ENCODE measurements at regions of chr11 and their contacts with region 1.

Region 1: GRCh38 chr11:30653606-30654005 is 67.5 kb upstream of the MPPED2 start:
- DNase-seq: no peak
- ATAC-seq: no peak
- H3K4me3 ChIP-seq: no peak overlapping the region
- H3K27ac ChIP-seq: no peak overlapping the region
- H3K4me1 ChIP-seq: no peaks in the 10 kb centered on the region
- H3K27me3 ChIP-seq: no peaks in the 10 kb centered on the region
- CTCF ChIP-seq: peak in 3 of 9 donors; percentile 26 to 42 (median 36)

Region 2: DNA sequence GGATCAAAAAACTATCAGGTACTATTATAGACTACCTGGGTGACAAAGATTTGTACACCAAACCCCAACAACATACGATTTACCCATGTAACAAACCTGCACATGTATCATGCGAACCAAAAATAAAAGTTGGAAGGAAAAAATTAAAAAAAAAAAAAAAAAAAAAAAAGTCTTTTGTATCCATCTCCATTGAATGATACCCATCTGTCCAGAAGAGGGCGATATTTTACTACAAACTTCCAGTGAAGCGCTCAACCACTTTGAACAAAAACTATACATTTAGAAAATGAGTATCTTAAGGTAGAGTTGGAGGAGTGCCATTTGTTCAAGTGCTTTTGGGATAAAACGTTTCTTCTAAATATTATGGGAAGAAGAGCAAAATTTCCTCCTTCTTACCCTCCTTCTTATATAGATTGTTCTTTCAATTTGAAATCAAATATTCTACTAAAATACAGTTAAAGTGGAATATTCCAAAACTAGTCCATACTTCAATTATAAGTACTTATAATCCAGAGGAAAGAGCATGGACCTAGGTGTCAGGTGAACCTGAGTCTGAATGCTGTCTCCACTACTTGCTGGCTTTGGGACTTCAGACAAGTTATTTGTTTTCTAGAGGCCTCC is 307.4 kb before region 1 on chr11:
- intact Hi-C with region 1: loop called in 5 of 10 experiments (anchors 5 to 10 kb)
- DNase-seq: peak in 1 of 2 donors; percentile 19
- ATAC-seq: peak in 5 of 8 donors; percentile 25 to 64 (median 62)
- H3K4me3 ChIP-seq: peak overlapping the region in 1 of 10 donors; percentile 13
- H3K27ac ChIP-seq: no peak overlapping the region
- H3K4me1 ChIP-seq: peaks cover 0 to 4% (median 0%) of the 10 kb centered on the region in 9 donors
- H3K27me3 ChIP-seq: no peaks in the 10 kb centered on the region
- CTCF ChIP-seq: peak; percentile 48 to 83 (median 67)

Region 3: DNA sequence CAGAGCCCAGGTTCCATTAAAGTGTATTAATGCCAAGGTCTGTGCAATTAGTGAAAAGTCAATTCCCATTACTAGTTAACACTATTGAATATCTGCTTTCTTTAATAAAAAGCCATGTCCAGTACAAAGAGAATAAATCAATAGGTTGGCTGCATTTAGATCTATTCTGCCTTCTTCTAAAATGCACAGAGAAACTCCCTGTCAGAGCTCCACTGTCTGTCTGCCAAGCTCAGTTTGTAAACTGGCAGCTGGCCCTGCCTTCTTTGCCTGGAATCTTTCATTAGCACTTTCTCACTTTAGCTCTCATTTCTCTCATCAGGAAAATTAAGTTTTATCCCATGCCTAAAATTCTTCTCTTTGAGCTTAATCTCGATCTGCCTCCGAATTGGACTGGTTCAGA is 295.1 kb before region 1 on chr11:
- intact Hi-C with region 1: loop called in 1 of 10 experiments (anchors 10 kb)
- DNase-seq: peak in 1 of 2 donors; percentile 39
- ATAC-seq: peak in 5 of 8 donors; percentile 33 to 75 (median 62)
- H3K4me3 ChIP-seq: no peak overlapping the region
- H3K27ac ChIP-seq: peak overlapping the region in 2 of 10 donors; percentile 33 to 46
- H3K4me1 ChIP-seq: peaks cover 0 to 16% (median 0%) of the 10 kb centered on the region in 9 donors
- H3K27me3 ChIP-seq: no peaks in the 10 kb centered on the region
- CTCF ChIP-seq: no peak

Region 4: DNA sequence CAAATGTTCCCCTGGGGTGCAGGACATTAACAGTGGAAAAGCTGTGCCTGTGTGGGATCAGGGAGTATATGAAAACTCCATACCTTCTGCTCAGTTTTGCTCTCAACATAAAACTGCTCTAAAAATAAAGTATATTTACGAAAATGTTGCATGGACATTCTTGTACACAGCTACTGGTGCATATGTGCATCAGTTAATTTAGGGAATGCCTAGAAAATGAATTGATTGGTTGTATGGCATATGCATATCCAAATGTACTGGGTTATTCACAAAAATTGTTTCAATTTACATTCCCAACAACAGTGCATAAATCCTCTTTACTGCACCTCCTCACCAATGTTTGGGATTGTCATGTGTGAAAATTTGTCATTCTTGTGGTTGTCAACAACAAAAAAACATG is 183.6 kb after region 1 on chr11:
- intact Hi-C with region 1: loop called in 1 of 10 experiments (anchors 5 kb)
- DNase-seq: no peak
- ATAC-seq: no peak
- H3K4me3 ChIP-seq: no peak overlapping the region
- H3K27ac ChIP-seq: no peak overlapping the region
- H3K4me1 ChIP-seq: no peaks in the 10 kb centered on the region
- H3K27me3 ChIP-seq: no peaks in the 10 kb centered on the region
- CTCF ChIP-seq: no peak

Measured in heart right ventricle (tissue), 16 donors.